Left cardiac atrium (tissue), 4 donors: ENCODE measurements at regions of chr10 and their contacts with region 1.

Region 1: GRCh38 chr10:60883187-60883586 is 60.8 kb downstream of the RHOBTB1 start:
- DNase-seq: peak; percentile 29
- ATAC-seq: peak; percentile 34 to 81

Region 2: GRCh38 chr10:60944159-60944909 is 61.1 kb after region 1 on chr10 and contains the start of gene RHOBTB1:
- intact Hi-C with region 1: loop called in 1 of 2 experiments (anchors 10 kb)
- DNase-seq: peak; percentile 84
- ATAC-seq: peak; percentile 90 to 94
- total RNA-seq, gene RHOBTB1: 9.5 to 14.1 TPM

Region 3: GRCh38 chr10:60964257-60965235 is 81.4 kb after region 1 on chr10:
- intact Hi-C with region 1: loop called in 1 of 2 experiments (anchors 5 kb)
- DNase-seq: peak; percentile 70
- ATAC-seq: peak; percentile 91 to 92

Region 4: GRCh38 chr10:61547297-61547696 is 664.1 kb after region 1 on chr10:
- intact Hi-C with region 1: no loop called
- DNase-seq: no peak
- ATAC-seq: no peak

Region 5: DNA sequence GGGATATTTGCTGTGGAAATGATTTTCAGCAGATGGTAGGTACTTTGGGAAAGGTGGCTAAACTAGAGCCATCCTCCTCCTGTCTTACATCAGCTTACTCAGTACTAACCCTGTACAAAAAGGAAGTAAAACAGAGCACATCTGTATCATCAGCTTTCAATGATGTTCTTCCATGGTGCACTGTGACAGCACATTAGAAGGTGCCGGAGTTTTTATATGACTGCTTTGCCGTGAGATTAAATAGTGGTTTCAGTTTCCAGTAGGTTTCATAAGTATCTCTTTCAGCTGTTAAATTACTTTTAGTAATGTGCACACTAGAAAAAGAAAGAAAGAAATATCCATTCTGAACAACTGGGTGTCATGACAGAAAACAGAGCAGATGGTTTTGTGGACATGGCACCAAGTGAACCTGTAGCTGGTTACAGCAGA is 1104.8 kb after region 1 on chr10:
- intact Hi-C with region 1: no loop called
- DNase-seq: no peak
- ATAC-seq: peak in 1 of 2 donors; percentile 36